Dorsolateral prefrontal cortex (tissue), 120 donors: ENCODE measurements at regions of chrX and their contacts with region 1.

Region 1: DNA sequence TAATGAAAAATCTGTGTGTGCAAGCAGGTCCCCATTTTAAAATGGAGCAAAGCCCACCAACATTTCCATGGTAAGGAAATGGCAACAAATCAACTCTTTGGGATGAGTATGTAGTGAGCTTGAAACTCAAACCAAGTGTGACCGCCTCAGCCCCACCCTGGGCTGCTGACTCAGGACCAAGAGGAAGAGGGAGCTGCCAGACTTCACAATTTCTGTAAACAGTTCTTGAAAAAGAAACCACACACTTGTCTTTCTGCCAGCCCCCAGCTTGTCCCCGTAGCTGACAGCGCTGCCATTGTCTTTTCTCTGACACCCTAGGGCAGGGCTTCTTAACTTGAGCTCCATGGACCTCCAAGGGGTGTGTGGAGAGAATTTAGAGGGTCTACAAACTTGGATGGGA is 10.3 kb downstream of the RTL5 start:
- DNase-seq: peak in 1 of 10 donors; percentile 62
- H3K4me3 ChIP-seq: no peak overlapping the region
- H3K27ac ChIP-seq: peak overlapping the region in 8 of 59 donors; percentile 2 to 48 (median 28)
- H3K27me3 ChIP-seq: peaks cover 0 to 62% (median 21%) of the 10 kb centered on the region in 45 donors
- CTCF ChIP-seq: no peak

Region 2: DNA sequence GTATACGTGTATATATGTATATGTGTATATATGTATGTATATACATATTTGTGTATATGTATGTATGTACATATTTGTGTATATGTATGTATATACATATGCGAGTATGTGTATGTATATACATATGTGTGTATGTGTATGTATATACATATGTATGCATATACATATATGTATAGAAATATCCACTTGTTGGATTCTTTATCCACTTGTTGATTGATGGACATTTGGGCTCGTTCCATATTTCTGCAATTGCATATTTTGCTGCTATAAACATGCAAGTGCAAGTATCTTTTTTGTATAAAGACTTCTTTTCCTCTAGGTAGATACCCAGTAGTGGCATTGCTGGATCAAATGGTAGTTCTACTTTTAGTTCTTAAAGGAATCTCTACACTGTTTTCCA is 236.3 kb before region 1 on chrX:
- intact Hi-C with region 1: no loop called
- DNase-seq: no peak
- H3K4me3 ChIP-seq: no peak overlapping the region
- H3K27ac ChIP-seq: no peak overlapping the region
- H3K27me3 ChIP-seq: peaks cover 0 to 24% (median 0%) of the 10 kb centered on the region in 45 donors
- CTCF ChIP-seq: no peak

Region 3: DNA sequence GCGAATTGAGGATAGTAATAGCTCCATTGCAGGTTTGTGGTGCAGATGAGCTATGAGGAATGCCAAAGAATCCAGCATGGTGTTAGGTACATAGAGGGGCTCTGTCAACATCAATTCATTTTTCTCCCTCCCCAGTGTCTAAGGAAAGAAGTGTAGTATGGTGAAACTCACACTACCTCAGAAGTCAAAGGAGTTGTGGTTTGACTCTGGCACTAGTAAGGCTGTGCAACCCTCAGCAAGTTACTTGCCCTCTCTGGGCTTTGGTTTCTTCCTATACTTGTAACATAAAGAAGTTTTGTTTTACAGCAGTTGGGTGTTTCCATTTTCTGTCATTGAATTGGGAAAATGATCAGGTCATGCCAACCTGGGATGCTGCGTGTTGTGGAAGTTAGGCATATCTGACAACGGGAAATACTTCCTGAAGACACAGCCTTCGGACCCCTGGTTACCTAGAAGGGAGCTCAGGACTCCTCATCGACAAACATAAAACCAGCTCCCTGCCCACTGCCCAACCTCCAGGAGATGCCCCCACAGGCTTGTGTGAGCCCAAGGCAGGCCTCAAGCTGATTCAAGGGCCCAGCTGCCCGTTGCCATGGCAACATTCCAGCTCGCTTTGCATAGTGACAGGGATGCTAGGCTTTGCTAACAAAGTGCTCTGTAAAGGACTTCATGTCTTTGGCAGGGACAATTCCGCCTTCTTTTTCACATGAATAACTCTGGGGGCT is 61.0 kb before region 1 on chrX:
- intact Hi-C with region 1: loop called in 1 of 2 experiments (anchors 5 kb)
- DNase-seq: peak; percentile 44 to 89 (median 76)
- H3K4me3 ChIP-seq: no peak overlapping the region
- H3K27ac ChIP-seq: peak overlapping the region in 17 of 59 donors; percentile 4 to 56 (median 32)
- H3K27me3 ChIP-seq: peaks cover 0 to 91% (median 20%) of the 10 kb centered on the region in 45 donors
- CTCF ChIP-seq: no peak